ENCODE measurements at regions of chr19 and their contacts with region 1.

Region 1: GRCh38 chr19:3984908-3985642 is at the start of gene EEF2:
- DNase-seq: peak; percentile 92 to 97
- ATAC-seq: peak; percentile 57 to 79 (median 68)
- H3K4me3 ChIP-seq: peak within 1 kb of the TSS; percentile 76
- H3K4me3 Mint-ChIP-seq: peak within 1 kb of the TSS; percentile 93
- H3K27ac ChIP-seq: peak within 1 kb of the TSS; percentile 90
- H3K27ac Mint-ChIP-seq: peak within 1 kb of the TSS; percentile 91 to 97
- H3K4me1 ChIP-seq: peaks cover 64% of the 10 kb centered on the region
- H3K4me1 Mint-ChIP-seq: peaks cover 42 to 54% of the 10 kb centered on the region in 2 donors
- H3K27me3 ChIP-seq: no peaks in the 10 kb centered on the region
- H3K27me3 Mint-ChIP-seq: no peaks in the 10 kb centered on the region
- CTCF ChIP-seq: no peak
- total RNA-seq, gene EEF2: 1,302 to 1,442 (median 1,437) TPM

Region 2: GRCh38 chr19:3830621-3831589 is 154.2 kb before region 1 on chr19:
- intact Hi-C with region 1: no loop called
- DNase-seq: no peak
- ATAC-seq: no peak
- H3K4me3 ChIP-seq: no peak overlapping the region
- H3K4me3 Mint-ChIP-seq: no peak overlapping the region
- H3K27ac ChIP-seq: no peak overlapping the region
- H3K27ac Mint-ChIP-seq: no peak overlapping the region
- H3K4me1 ChIP-seq: peaks cover 4% of the 10 kb centered on the region
- H3K4me1 Mint-ChIP-seq: no peaks in the 10 kb centered on the region
- H3K27me3 ChIP-seq: no peaks in the 10 kb centered on the region
- H3K27me3 Mint-ChIP-seq: no peaks in the 10 kb centered on the region
- CTCF ChIP-seq: no peak

Region 3: DNA sequence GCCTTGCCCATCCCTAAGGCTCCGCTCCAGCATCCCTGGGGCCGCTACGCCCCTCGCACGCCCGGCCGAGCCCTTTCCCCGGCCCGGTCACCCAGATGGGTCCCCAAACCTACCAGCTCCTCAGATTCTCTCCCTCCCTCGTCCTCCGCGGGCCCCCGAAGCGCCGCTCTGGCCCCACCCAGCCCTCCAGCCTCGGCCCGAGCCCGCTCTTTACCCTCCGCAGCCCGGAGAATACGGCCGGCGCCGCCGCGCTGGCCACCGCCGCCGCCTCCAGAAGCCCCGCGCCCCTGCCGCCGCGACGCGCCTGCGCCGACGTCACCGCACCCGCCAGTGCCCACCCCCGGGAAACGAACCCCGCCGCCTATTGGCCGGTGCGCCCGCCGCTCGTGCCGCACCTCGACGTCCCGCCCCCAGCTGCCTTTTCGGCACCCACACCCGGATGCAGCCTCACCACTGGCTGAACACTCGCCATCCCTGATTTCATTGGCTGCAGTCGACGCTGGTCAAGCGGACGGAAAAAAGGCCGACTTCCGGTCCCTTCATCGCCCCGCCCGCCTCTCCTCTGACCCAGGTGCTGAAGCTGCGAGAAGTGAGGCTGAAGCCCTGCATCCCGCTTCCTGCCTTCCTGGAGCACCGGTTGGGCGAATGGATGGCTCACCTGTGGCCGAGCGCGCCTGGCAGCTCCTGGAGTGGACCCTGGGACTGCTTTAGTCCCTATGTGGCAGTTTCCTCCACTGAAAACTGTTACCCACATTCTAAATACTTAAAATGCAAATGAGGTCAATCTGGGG is 14.1 kb before region 1 on chr19 and contains the start of gene DAPK3:
- intact Hi-C with region 1: loop called (anchors 1 kb)
- DNase-seq: peak; percentile 91 to 92
- ATAC-seq: peak; percentile 95 to 99 (median 96)
- H3K4me3 ChIP-seq: peak within 1 kb of the TSS; percentile 100
- H3K4me3 Mint-ChIP-seq: peak within 1 kb of the TSS; percentile 91
- H3K27ac ChIP-seq: peak within 1 kb of the TSS; percentile 87
- H3K27ac Mint-ChIP-seq: peak within 1 kb of the TSS; percentile 77 to 87
- H3K4me1 ChIP-seq: peaks cover 28% of the 10 kb centered on the region
- H3K4me1 Mint-ChIP-seq: peaks cover 22 to 29% of the 10 kb centered on the region in 2 donors
- H3K27me3 ChIP-seq: no peaks in the 10 kb centered on the region
- H3K27me3 Mint-ChIP-seq: no peaks in the 10 kb centered on the region
- CTCF ChIP-seq: no peak
- total RNA-seq, gene DAPK3: 54.3 to 66.4 (median 58.1) TPM

Region 4: GRCh38 chr19:4065430-4066175 is 80.5 kb after region 1 on chr19:
- intact Hi-C with region 1: loop called (anchors 5 kb)
- DNase-seq: peak; percentile 98
- ATAC-seq: peak; percentile 76 to 92 (median 79)
- H3K4me3 ChIP-seq: peak overlapping the region; percentile 99
- H3K4me3 Mint-ChIP-seq: peak overlapping the region; percentile 74
- H3K27ac ChIP-seq: no peak overlapping the region
- H3K27ac Mint-ChIP-seq: peak overlapping the region in 1 of 2 donors; percentile 86
- H3K4me1 ChIP-seq: peaks cover 67% of the 10 kb centered on the region
- H3K4me1 Mint-ChIP-seq: peaks cover 24 to 35% of the 10 kb centered on the region in 2 donors
- H3K27me3 ChIP-seq: no peaks in the 10 kb centered on the region
- H3K27me3 Mint-ChIP-seq: no peaks in the 10 kb centered on the region
- CTCF ChIP-seq: no peak

Region 5: DNA sequence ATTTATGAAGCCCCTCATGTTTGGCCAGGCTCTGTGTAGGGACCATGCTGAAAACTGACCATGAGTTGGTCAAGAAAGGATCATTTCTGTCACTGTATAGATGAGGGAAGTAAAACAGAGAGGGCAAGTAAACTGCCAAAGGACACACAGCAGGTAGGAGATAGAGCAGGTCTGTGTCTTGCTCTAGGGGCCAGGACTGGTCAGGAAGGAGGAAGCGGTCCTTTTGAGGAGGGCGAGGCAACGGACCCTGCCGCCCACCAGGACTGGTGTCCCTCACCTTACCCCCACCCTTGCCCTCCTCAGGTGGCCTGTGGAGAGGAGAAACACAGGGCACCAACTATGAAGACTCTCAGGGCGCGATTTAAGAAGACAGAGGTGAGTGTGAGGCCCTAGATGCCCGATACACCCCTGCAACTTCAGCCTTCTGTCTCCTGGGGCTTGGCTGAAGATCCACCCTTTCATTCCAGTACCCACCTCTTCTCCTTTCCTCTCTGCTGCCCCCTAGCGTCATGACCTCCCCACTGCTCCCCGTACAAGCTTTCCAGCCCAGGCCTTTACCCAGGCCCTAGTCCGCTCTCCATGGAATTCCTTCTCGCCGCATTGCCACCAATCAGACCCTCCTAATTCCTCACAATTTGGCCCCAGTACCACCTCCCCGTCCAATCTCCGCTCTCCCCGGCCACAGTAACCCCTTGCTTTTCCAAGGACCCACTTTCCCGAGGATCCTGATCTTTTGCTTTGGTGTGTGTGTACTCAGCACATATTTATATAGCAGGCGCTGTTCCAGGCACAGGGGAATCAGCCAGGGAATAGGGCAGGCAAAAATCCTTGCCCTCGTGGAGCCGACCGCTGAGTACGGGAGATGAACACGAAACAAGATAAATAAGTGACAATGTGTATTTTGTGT is 201.3 kb after region 1 on chr19:
- intact Hi-C with region 1: loop called (anchors 5 kb)
- DNase-seq: peak; percentile 64 to 83
- ATAC-seq: peak; percentile 46 to 62 (median 49)
- H3K4me3 ChIP-seq: no peak overlapping the region
- H3K4me3 Mint-ChIP-seq: no peak overlapping the region
- H3K27ac ChIP-seq: no peak overlapping the region
- H3K27ac Mint-ChIP-seq: no peak overlapping the region
- H3K4me1 ChIP-seq: peaks cover 23% of the 10 kb centered on the region
- H3K4me1 Mint-ChIP-seq: peaks cover 8 to 28% of the 10 kb centered on the region in 2 donors
- H3K27me3 ChIP-seq: no peaks in the 10 kb centered on the region
- H3K27me3 Mint-ChIP-seq: peaks cover 0 to 4% of the 10 kb centered on the region in 2 donors
- CTCF ChIP-seq: peak; percentile 69

Measured in natural killer cell (primary cell).